Gastrocnemius medialis (tissue), 4 donors: ENCODE measurements at regions of chr13 and their contacts with region 1.

Region 1: DNA sequence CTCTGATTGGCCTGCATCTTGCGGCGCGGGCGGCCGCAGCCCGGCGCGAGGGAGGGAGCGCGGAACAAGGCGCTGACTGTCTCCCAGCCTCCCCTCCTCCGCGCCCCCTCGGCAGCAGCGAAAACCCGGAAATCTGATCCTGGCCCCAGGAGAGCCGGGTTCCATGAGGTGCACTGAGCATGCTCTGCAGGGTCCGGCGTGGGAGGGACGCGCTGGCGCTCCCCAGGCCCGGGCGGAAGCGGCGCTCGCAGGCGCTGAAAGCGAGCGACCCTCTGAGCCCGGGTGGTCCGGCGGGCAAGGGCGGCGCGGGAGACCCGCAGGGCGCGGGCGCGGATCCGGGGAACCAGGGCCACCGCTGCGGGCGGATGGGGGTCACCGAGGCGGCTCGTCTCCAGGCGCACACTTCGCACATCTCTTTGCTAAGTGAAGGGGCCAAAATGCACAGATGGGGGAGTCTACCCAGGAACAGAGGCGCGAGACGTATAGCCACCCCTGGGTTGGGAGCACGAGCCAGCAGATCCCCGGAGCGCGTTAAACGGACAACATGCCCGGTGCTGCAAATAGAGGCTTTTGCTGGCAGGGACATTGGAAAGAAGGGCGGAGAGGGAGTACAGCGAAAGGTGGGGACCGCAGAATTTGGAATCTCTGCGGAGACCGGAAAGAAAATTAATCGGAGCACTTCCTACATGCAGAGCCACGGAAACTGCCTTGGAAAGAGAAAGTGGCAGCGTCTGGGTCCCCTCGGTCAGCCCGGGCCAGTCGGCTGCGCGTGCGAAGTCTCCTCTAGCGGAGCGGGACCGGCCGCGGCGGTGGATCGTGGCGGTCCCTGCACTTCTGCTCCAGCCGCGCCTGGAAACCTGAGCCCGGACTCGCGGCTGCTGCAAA is 510 bp upstream of the PCDH9 start:
- DNase-seq: peak; percentile 85 to 90
- ATAC-seq: peak; percentile 86 to 91
- H3K4me3 ChIP-seq: peak overlapping the region; percentile 76 to 88 (median 83)
- H3K27ac ChIP-seq: peak overlapping the region; percentile 82 to 87 (median 85)
- H3K4me1 ChIP-seq: peaks cover 3 to 9% of the 10 kb centered on the region in 2 donors
- H3K27me3 ChIP-seq: no peaks in the 10 kb centered on the region
- CTCF ChIP-seq: no peak
- POLR2A ChIP-seq: peak; percentile 48 to 60

Region 2: GRCh38 chr13:66624302-66624701 is 606.3 kb before region 1 on chr13:
- in situ Hi-C with region 1: no loop called
- intact Hi-C with region 1: loop called (anchors 10 kb)
- DNase-seq: no peak
- ATAC-seq: peak in 1 of 2 donors; percentile 47
- H3K4me3 ChIP-seq: no peak overlapping the region
- H3K27ac ChIP-seq: no peak overlapping the region
- H3K4me1 ChIP-seq: peaks cover 8 to 9% of the 10 kb centered on the region in 2 donors
- H3K27me3 ChIP-seq: no peaks in the 10 kb centered on the region
- CTCF ChIP-seq: no peak
- POLR2A ChIP-seq: no peak